ENCODE measurements at regions of chr20 and their contacts with region 1.

Region 1: DNA sequence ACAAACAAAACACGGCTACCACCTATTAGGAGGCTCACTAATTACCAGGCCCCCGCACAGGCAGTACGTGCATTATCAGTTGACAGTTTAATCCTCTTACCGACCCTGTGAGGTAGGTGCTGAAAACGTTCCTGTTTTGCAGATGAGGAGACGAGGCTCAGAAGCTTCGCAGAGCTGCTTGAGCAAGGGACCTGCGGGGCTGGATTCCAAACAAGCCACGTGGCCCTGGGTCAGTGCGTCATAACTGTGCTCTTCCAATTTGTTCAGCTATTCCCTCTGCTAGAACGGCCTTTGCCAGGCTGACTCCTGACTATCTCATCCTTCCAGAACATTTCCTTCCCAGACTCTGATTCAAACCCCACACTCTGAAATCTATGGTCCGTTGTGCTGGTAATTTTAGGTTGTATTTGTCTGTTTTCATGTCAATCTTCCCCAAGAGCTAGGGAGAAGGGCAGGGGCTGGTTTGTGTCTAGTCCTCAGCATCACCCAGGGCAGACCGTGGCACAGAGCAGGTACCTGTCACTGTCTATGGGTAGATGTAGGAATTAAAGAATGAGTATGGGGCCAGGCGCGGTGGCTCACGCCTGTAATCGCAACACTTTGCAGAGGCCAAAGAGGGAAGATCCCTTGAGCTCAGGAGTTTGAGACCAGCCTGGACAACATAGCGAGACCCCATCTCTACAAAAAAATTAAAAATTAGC is 28.8 kb upstream of the TLDC2 start:
- DNase-seq: no peak
- H3K4me3 ChIP-seq: no peak overlapping the region
- H3K4me3 Mint-ChIP-seq: no peak overlapping the region
- H3K27ac ChIP-seq: no peak overlapping the region
- H3K27ac Mint-ChIP-seq: peak overlapping the region in 3 of 7 donors; percentile 10 to 54 (median 32)
- H3K4me1 ChIP-seq: peaks cover 27 to 40% of the 10 kb centered on the region in 2 donors
- H3K4me1 Mint-ChIP-seq: peaks cover 37% of the 10 kb centered on the region
- H3K27me3 ChIP-seq: no peaks in the 10 kb centered on the region
- H3K27me3 Mint-ChIP-seq: peaks cover 0 to 2% (median 0%) of the 10 kb centered on the region in 3 donors
- CTCF ChIP-seq: no peak

Region 2: DNA sequence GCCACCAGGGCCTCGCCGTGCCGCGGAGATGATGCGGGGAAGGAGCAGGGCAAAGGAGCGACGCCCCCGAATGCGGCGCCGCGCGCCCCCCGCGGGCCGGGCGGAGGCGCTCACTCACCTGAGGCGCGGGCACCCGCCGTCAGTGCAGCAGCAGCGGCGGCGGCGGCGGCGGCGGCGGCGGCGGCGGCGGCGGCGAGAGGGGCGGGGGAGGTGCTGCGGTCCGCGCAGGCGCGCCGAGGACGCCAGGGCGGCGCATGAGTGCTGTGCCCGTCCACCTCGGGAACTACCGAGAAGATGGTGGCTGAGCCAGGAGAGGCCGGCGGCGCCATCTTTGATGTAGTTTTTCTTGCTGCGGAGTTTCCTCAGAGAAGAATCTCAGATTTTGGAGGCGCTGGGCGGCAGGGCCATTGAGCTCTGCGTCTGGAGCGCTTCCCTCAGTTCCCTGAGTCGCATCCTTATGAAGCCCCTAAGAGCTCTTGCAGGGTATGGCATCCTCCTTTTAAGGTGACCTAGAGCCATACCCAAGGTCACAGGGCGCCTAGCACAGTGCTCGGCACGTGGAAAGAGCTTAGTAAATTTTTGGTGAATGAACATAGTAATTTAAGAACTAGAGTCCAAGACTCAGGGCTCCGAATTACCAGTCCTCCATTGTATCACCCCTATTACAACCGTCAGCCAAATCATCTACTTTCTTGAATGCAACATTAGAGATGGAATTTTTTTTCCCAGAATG is 101.1 kb before region 1 on chr20 and contains the start of gene NDRG3:
- intact Hi-C with region 1: no loop called
- DNase-seq: peak; percentile 89 to 94 (median 92)
- H3K4me3 ChIP-seq: peak within 1 kb of the TSS; percentile 57 to 85 (median 69)
- H3K4me3 Mint-ChIP-seq: peak within 1 kb of the TSS; percentile 93 to 96
- H3K27ac ChIP-seq: peak within 1 kb of the TSS; percentile 25 to 58
- H3K27ac Mint-ChIP-seq: peak within 1 kb of the TSS; percentile 60 to 85 (median 76)
- H3K4me1 ChIP-seq: peaks cover 12 to 17% of the 10 kb centered on the region in 2 donors
- H3K4me1 Mint-ChIP-seq: peaks cover 22% of the 10 kb centered on the region
- H3K27me3 ChIP-seq: no peaks in the 10 kb centered on the region
- H3K27me3 Mint-ChIP-seq: peaks cover 2 to 9% (median 7%) of the 10 kb centered on the region in 3 donors
- CTCF ChIP-seq: no peak
- polyA plus RNA-seq, gene NDRG3: 16.0 to 23.2 (median 21.7) TPM

Region 3: GRCh38 chr20:36808317-36809257 is 38.6 kb before region 1 on chr20:
- intact Hi-C with region 1: loop called in 1 of 2 experiments (anchors 2 kb)
- DNase-seq: peak; percentile 98 to 100 (median 99)
- H3K4me3 ChIP-seq: no peak overlapping the region
- H3K4me3 Mint-ChIP-seq: no peak overlapping the region
- H3K27ac ChIP-seq: peak overlapping the region; percentile 78 to 87
- H3K27ac Mint-ChIP-seq: peak overlapping the region; percentile 92 to 98 (median 96)
- H3K4me1 ChIP-seq: peaks cover 13 to 17% of the 10 kb centered on the region in 2 donors
- H3K4me1 Mint-ChIP-seq: peaks cover 10% of the 10 kb centered on the region
- H3K27me3 ChIP-seq: no peaks in the 10 kb centered on the region
- H3K27me3 Mint-ChIP-seq: peaks cover 0 to 2% (median 0%) of the 10 kb centered on the region in 3 donors
- CTCF ChIP-seq: peak; percentile 99

Measured in CD14-positive monocyte (primary cell).